CD4-positive, alpha-beta memory T cell (primary cell): ENCODE measurements at regions of chr21 and their contacts with region 1.

Region 1: GRCh38 chr21:14602382-14602958 is 56.4 kb upstream of the SAMSN1 start:
- DNase-seq: no peak
- H3K4me3 ChIP-seq: peak overlapping the region in 1 of 2 donors; percentile 21
- H3K4me3 Mint-ChIP-seq: peak overlapping the region; percentile 17 to 81 (median 77)
- H3K27ac ChIP-seq: no peak overlapping the region
- H3K27ac Mint-ChIP-seq: peak overlapping the region in 5 of 7 donors; percentile 29 to 79 (median 54)
- H3K4me1 ChIP-seq: peaks cover 20% of the 10 kb centered on the region
- H3K4me1 Mint-ChIP-seq: peaks cover 17 to 27% (median 19%) of the 10 kb centered on the region in 4 donors
- H3K27me3 ChIP-seq: no peaks in the 10 kb centered on the region
- H3K27me3 Mint-ChIP-seq: no peaks in the 10 kb centered on the region

Region 2: GRCh38 chr21:14492931-14493330 is 109.5 kb before region 1 on chr21:
- CTCF ChIA-PET with region 1: no interaction called
- POLR2A ChIA-PET with region 1: no interaction called
- intact Hi-C with region 1: loop called (anchors 5 kb)
- DNase-seq: no peak
- H3K4me3 ChIP-seq: no peak overlapping the region
- H3K4me3 Mint-ChIP-seq: no peak overlapping the region
- H3K27ac ChIP-seq: no peak overlapping the region
- H3K27ac Mint-ChIP-seq: peak overlapping the region in 6 of 7 donors; percentile 8 to 76 (median 56)
- H3K4me1 ChIP-seq: peaks cover 20% of the 10 kb centered on the region
- H3K4me1 Mint-ChIP-seq: peaks cover 20 to 40% (median 25%) of the 10 kb centered on the region in 4 donors
- H3K27me3 ChIP-seq: no peaks in the 10 kb centered on the region
- H3K27me3 Mint-ChIP-seq: no peaks in the 10 kb centered on the region

Region 3: DNA sequence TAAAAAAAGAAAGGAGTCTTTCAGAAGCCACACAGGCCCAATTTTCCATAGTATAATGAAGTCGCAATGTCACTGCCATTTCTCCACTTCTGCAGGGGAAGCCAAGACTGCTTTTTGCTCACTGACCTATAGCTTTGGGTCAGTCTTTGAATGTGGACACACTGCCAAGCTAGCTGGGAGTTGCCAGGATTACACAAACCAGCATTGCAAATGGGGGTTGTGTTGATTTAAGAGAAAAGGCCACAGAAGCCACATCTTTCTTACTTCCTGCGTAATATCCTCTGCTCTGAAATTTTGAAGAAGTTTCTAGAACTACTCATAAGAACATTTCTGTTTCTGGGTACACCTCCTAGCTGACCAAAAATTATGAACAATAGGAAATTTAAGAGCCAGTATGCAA is 10.6 kb before region 1 on chr21:
- CTCF ChIA-PET with region 1: interaction called, 5 read pairs
- POLR2A ChIA-PET with region 1: interaction called, 11 read pairs
- intact Hi-C with region 1: no loop called
- DNase-seq: peak in 3 of 5 donors; percentile 16 to 37 (median 29)
- H3K4me3 ChIP-seq: no peak overlapping the region
- H3K4me3 Mint-ChIP-seq: peak overlapping the region in 6 of 8 donors; percentile 5 to 49 (median 26)
- H3K27ac ChIP-seq: no peak overlapping the region
- H3K27ac Mint-ChIP-seq: peak overlapping the region in 6 of 7 donors; percentile 26 to 89 (median 64)
- H3K4me1 ChIP-seq: peaks cover 25% of the 10 kb centered on the region
- H3K4me1 Mint-ChIP-seq: peaks cover 21 to 31% (median 25%) of the 10 kb centered on the region in 4 donors
- H3K27me3 ChIP-seq: no peaks in the 10 kb centered on the region
- H3K27me3 Mint-ChIP-seq: no peaks in the 10 kb centered on the region

Region 4: GRCh38 chr21:14657241-14658008 is 55.0 kb after region 1 on chr21:
- CTCF ChIA-PET with region 1: no interaction called
- POLR2A ChIA-PET with region 1: no interaction called
- intact Hi-C with region 1: no loop called
- DNase-seq: no peak
- H3K4me3 ChIP-seq: no peak overlapping the region
- H3K4me3 Mint-ChIP-seq: no peak overlapping the region
- H3K27ac ChIP-seq: no peak overlapping the region
- H3K27ac Mint-ChIP-seq: peak overlapping the region in 2 of 7 donors; percentile 9 to 22
- H3K4me1 ChIP-seq: no peaks in the 10 kb centered on the region
- H3K4me1 Mint-ChIP-seq: peaks cover 1 to 9% (median 5%) of the 10 kb centered on the region in 4 donors
- H3K27me3 ChIP-seq: no peaks in the 10 kb centered on the region
- H3K27me3 Mint-ChIP-seq: no peaks in the 10 kb centered on the region

Region 5: DNA sequence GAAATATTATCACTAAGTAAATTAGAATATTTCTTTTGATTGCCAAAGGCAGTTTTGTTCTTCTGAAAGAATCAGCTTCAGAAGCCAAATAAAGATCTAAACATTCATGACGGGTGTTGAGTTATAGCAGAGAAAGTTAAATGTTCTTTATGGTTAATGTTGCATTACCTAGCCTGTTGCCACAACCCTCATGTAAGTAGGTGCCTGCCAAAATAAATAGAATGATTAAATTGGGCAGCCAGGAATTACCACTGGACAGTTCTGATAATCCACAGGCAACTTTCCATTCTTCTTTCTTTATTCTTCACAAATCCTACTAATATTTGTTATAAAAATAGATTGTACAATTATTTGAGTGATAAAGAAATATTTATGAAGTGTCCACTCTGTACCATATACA is 680.2 kb after region 1 on chr21:
- CTCF ChIA-PET with region 1: no interaction called
- POLR2A ChIA-PET with region 1: no interaction called
- intact Hi-C with region 1: no loop called
- DNase-seq: no peak
- H3K4me3 ChIP-seq: no peak overlapping the region
- H3K4me3 Mint-ChIP-seq: no peak overlapping the region
- H3K27ac ChIP-seq: no peak overlapping the region
- H3K27ac Mint-ChIP-seq: no peak overlapping the region
- H3K4me1 ChIP-seq: no peaks in the 10 kb centered on the region
- H3K4me1 Mint-ChIP-seq: no peaks in the 10 kb centered on the region
- H3K27me3 ChIP-seq: no peaks in the 10 kb centered on the region
- H3K27me3 Mint-ChIP-seq: peaks cover 1 to 4% of the 10 kb centered on the region in 2 donors